ENCODE measurements at regions of chr17 and their contacts with region 1.

Region 1: GRCh38 chr17:40909351-40909750 is 24.3 kb upstream of the KRT20 start:
- DNase-seq: peak; percentile 29
- H3K4me3 Mint-ChIP-seq: no peak overlapping the region
- H3K27ac Mint-ChIP-seq: no peak overlapping the region
- H3K4me1 Mint-ChIP-seq: no peaks in the 10 kb centered on the region
- H3K27me3 Mint-ChIP-seq: peaks cover 26% of the 10 kb centered on the region

Region 2: GRCh38 chr17:40803617-40804082 is 105.7 kb before region 1 on chr17:
- intact Hi-C with region 1: loop called (anchors 10 kb)
- DNase-seq: peak; percentile 49
- H3K4me3 Mint-ChIP-seq: no peak overlapping the region
- H3K27ac Mint-ChIP-seq: no peak overlapping the region
- H3K4me1 Mint-ChIP-seq: no peaks in the 10 kb centered on the region
- H3K27me3 Mint-ChIP-seq: peaks cover 39% of the 10 kb centered on the region

Region 3: GRCh38 chr17:41308251-41308917 is 399.0 kb after region 1 on chr17:
- intact Hi-C with region 1: loop called (anchors 5 kb)
- DNase-seq: no peak
- H3K4me3 Mint-ChIP-seq: no peak overlapping the region
- H3K27ac Mint-ChIP-seq: no peak overlapping the region
- H3K4me1 Mint-ChIP-seq: peaks cover 32% of the 10 kb centered on the region
- H3K27me3 Mint-ChIP-seq: peaks cover 12% of the 10 kb centered on the region

Region 4: DNA sequence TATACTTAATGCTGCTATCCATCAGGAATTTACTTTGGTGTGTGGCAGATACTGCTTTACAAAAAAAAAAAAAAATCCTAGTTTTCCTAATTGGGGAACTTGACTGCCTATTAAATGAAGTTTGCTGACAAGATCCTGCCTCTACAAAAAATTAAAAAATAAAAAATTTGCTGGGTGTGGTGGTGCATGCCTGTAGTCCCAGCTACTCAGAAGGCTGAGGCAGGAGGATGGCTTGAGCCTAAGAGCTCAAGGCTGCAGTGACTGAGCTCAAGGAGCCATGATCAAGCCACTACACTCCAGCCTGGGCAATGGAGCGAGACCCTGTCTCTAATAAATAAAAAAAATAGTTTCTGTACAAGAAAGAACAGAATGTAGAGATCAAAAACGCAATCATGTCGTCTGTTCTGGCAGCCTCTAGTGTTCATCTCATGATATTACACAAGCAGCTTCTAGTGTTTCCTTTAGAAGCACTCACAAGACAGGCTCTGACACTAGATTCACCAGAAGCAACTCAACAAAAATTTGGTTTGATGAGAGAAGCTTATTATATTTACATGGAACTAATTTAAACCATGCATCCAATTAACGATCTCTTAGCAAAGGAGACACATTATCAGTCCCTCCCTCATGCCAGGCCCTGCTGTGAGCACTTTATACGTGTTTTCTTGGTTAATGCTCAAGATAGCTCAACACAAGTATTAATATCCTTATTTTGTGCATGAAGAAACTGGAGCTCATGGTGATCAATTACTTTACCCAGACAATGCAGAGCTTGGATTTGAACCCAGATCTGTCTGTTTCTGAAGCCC is 412.9 kb after region 1 on chr17:
- intact Hi-C with region 1: loop called (anchors 5 kb)
- DNase-seq: no peak
- H3K4me3 Mint-ChIP-seq: no peak overlapping the region
- H3K27ac Mint-ChIP-seq: no peak overlapping the region
- H3K4me1 Mint-ChIP-seq: peaks cover 7% of the 10 kb centered on the region
- H3K27me3 Mint-ChIP-seq: no peaks in the 10 kb centered on the region

Region 5: DNA sequence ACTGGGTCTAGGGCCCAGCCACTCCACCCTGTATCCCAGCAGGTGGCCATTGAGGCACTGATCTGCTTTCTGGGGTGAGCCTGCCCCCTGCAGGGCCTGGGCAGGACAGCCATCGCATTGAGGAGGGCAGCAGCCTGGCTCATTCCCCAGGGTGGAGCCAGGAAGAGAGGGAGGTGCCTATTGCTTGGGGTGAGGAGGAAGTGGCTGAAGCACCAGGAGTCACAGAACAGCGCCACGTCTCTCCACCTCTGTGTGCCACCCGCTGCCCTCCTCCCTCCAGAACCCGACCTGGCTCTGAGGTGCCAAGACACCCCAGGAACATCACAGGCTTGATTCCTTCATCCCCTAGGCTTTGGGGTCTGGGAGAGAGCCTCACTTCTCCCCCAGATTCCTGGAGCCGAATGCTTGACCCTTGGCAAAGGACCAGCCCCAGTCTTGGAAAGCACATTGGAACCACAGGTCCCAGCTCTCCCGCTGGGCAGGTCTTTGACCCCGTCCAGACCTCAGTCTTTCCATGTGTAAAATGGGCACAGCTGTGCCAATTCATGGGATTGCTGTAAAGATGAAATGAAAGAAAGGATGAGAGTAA is 587.6 kb after region 1 on chr17:
- intact Hi-C with region 1: loop called (anchors 1 kb)
- DNase-seq: peak; percentile 62
- H3K4me3 Mint-ChIP-seq: no peak overlapping the region
- H3K27ac Mint-ChIP-seq: no peak overlapping the region
- H3K4me1 Mint-ChIP-seq: no peaks in the 10 kb centered on the region
- H3K27me3 Mint-ChIP-seq: peaks cover 3% of the 10 kb centered on the region